Body of pancreas (tissue), 4 donors: ENCODE measurements at regions of chr5 and their contacts with region 1.

Region 1: DNA sequence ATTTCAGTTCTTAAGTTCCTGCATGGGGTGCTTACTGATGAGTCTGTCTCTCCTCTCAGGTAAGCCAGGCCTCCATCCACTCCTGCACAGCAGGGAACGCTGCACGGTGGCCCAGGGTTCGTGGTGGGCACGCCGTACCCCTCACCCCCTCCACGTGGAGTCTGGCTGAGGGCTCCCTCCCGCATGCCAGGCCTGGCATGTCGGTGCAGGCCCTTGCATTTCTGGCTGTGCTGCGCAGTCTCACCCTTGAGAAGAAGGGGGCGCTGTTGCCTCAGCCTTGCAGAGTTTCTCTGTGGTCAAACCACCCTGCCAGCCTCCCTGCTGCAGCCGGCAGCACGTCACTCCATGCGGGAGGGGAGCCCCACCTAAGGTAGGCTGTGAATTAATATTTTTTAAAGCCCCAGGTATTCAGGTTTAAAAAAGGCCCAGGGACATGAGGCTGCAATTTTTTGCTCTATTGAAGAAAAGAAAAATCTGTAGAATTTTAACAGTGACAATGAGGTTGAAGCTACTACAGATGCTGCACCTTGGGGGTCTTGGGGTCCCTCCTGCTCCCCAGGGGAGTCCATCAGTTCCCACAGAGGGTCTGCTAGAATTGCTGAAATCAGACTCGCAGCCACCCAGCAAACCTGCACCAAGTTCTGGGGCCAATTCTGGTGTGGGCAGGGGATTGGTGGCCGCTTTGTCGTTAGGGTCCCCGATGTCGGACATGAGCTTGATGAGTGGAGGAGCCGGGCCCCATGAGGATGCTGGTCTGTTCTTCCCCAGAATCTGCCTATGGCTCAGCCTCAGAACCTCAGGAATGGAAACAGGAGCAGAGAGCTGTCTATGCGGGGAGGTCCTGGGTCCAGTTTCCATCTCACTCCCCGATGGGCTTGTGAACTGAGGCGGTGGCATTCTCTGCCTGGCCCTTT is 52.6 kb downstream of the TENT4A start:
- DNase-seq: peak; percentile 72 to 77 (median 75)
- ATAC-seq: peak; percentile 73
- H3K4me3 ChIP-seq: no peak overlapping the region
- H3K27ac ChIP-seq: peak overlapping the region in 3 of 4 donors; percentile 53 to 80 (median 76)
- H3K4me1 ChIP-seq: peaks cover 16% of the 10 kb centered on the region
- H3K27me3 ChIP-seq: no peaks in the 10 kb centered on the region
- CTCF ChIP-seq: peak; percentile 52 to 82 (median 76)
- POLR2A ChIP-seq: no peak

Region 2: DNA sequence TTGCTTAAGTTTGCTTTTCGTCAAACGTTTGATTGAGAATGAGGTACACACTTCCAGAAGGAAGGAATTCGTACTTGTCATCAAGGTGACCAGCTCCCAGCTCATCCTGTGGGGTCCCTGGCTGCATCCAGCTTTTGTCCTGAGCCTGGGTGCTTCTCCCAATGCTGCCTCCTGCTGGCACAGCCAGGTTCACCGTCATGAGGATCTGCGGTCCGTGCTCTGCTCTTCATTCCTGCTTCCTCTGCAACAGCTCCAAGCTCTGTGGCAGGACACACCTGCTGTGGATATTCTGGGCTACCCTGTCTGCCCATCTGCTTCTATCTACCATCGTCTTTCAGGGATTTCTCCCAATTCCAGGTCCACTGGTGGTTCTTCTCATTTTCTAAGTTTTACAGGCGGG is 330.5 kb before region 1 on chr5:
- intact Hi-C with region 1: no loop called
- DNase-seq: no peak
- ATAC-seq: no peak
- H3K4me3 ChIP-seq: no peak overlapping the region
- H3K27ac ChIP-seq: no peak overlapping the region
- H3K4me1 ChIP-seq: no peaks in the 10 kb centered on the region
- H3K27me3 ChIP-seq: no peaks in the 10 kb centered on the region
- CTCF ChIP-seq: peak in 1 of 7 experiments; percentile 11
- POLR2A ChIP-seq: no peak

Region 3: DNA sequence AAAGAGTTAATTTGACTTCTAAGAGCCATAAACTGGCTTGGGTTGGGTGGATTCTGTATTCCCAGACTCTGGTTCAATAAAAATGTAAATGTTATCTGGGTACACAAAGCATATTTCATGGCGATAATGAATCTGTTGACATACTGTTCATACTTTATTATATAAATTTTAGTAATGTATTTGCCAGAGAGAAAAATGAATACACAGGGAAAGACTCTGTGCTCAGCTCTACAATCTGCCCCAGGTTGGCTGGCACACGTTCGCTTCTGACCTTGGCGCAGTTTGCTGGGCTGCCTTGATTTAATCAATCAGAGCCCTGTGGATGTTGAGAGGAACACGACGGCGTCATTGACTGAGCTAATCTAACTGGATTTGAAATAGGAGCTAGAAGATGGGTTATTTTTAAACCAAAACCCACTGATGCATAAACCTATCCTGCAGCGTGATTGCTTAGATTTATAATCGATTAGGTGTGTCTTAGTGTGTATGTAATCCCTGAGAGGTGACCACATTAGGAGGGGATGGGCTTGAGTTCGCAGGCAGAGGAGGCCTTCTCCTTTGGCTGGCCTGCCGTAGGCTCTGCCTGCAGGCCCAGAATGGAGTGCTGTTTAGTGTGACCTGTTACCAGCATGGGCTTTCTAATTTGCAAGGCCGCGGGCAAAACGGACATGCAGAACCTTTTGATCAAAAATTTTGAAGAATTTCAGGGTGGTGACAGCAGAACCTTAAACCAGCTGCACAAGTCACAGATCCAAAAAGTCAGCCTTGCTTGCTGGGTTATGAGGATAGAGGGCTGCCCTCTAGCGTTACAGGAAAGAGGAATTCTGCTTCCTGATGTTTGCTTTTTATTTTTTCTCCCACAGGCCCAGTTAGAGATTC is 626.2 kb after region 1 on chr5:
- intact Hi-C with region 1: loop called (anchors 10 kb)
- DNase-seq: peak in 3 of 4 donors; percentile 20 to 48 (median 39)
- ATAC-seq: peak; percentile 48
- H3K4me3 ChIP-seq: no peak overlapping the region
- H3K27ac ChIP-seq: peak overlapping the region in 3 of 4 donors; percentile 10 to 63 (median 13)
- H3K4me1 ChIP-seq: peaks cover 28% of the 10 kb centered on the region
- H3K27me3 ChIP-seq: no peaks in the 10 kb centered on the region
- CTCF ChIP-seq: peak; percentile 23 to 62 (median 56)
- POLR2A ChIP-seq: no peak